Naive thymus-derived CD8-positive, alpha-beta T cell (primary cell): ENCODE measurements at regions of chr11 and their contacts with region 1.

Region 1: DNA sequence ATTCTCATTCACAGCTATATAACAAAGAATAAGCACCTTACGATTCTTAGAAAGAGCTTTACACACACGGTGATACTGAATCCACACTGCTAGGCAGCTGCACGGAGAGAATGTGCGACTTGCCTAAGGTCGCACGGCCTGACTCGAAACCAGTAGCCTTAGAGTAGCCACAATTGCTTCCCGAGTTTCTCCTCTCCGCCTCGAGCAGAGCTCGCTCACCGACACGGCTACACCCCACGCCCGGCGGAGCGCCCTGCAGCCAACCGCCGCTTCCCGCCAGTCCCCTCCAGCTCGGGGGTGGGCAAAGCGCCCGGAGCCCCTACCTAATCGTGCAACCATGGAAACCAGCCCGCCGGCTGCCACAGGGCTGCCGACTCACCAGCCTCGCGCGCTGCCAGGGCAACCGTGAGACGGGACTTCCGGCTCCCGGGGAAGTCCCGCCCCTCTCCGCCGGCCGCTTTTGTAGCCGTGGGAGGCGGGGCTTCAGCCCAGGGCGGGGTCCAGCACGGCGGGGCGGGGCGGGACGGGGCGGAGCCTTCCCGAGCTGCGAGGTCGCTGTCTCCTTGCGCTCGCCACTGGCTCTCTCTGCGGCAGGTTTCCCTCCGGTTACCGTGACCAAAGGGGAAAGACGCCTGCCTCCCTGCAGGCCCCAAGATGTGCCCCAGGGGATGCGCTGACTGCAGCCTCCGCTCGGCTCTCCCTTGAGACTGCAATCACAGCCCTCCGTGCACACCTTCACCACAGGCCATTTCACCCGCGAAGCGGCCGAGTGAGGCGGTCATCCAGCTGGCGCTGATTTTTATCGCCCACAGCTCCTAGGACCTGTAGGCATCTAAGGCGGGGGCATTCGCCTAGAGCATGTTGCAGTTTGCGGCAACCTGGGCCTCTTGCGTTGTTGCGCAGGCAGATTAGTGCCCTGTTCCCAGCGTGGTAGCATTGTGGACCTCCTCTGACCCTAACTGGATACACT is 1.1 kb downstream of the BSCL2 start:
- DNase-seq: peak; percentile 89 to 98 (median 94)
- ATAC-seq: peak; percentile 62
- H3K4me3 Mint-ChIP-seq: peak overlapping the region; percentile 85 to 95 (median 90)
- H3K27ac Mint-ChIP-seq: peak overlapping the region; percentile 88 to 100 (median 96)
- H3K4me1 Mint-ChIP-seq: peaks cover 24 to 56% (median 42%) of the 10 kb centered on the region in 4 donors
- H3K27me3 Mint-ChIP-seq: no peaks in the 10 kb centered on the region

Region 2: GRCh38 chr11:62069986-62070919 is 635.9 kb before region 1 on chr11:
- POLR2A ChIA-PET with region 1: no interaction called
- DNase-seq: no peak
- ATAC-seq: no peak
- H3K4me3 Mint-ChIP-seq: no peak overlapping the region
- H3K27ac Mint-ChIP-seq: no peak overlapping the region
- H3K4me1 Mint-ChIP-seq: no peaks in the 10 kb centered on the region
- H3K27me3 Mint-ChIP-seq: peaks cover 0 to 9% (median 2%) of the 10 kb centered on the region in 5 donors

Region 3: DNA sequence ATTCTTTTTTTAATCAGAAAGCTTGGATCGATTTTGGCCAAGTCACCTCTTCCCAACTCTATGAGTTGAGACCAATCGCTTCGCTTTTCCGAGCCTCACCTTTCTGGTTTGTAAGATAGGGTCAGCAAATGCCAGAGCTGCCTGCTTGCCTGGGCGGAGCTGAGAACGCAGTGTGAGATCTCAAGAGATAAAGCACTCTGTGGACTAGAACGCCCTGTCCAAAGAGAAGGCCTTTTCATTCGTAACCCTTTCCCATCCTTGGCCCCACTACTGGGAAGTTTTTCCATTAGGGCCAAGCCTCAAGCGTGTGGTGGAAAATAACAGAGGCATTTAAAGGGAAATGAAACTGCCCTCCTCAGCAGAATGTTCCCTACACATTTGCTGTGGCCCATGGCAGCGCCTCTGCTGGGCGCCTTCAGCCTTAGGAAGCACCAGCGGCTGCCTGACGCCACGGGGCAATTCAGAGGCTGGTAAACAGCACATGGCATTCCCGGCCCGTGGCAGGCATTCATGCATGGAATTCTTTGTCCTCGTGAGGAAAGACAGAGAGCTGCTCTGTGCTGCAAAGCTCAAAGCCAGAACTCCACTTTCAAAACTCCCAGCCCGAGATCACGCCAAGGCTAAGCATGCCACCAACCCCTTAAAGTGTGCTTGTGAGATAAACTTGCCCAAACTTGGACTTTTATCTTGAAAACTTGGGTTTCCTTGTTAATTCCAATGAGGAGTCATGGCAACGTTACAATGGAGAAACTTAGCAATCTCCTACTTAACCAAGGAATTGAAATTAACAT is 197.7 kb before region 1 on chr11:
- POLR2A ChIA-PET with region 1: no interaction called
- DNase-seq: peak in 1 of 10 donors; percentile 14
- ATAC-seq: no peak
- H3K4me3 Mint-ChIP-seq: no peak overlapping the region
- H3K27ac Mint-ChIP-seq: no peak overlapping the region
- H3K4me1 Mint-ChIP-seq: peaks cover 0 to 13% (median 0%) of the 10 kb centered on the region in 4 donors
- H3K27me3 Mint-ChIP-seq: peaks cover 0 to 18% (median 5%) of the 10 kb centered on the region in 5 donors

Region 4: GRCh38 chr11:62612366-62613290 is 93.5 kb before region 1 on chr11 and contains the starts of genes EML3 and ROM1:
- POLR2A ChIA-PET with region 1: interaction called, 13 read pairs
- DNase-seq: peak; percentile 79 to 94 (median 88)
- ATAC-seq: peak; percentile 74 to 78
- H3K4me3 Mint-ChIP-seq: peak within 1 kb of the TSS; percentile 91 to 98 (median 94)
- H3K27ac Mint-ChIP-seq: peak within 1 kb of the TSS; percentile 96 to 99 (median 98)
- H3K4me1 Mint-ChIP-seq: peaks cover 32 to 59% (median 57%) of the 10 kb centered on the region in 4 donors
- H3K27me3 Mint-ChIP-seq: no peaks in the 10 kb centered on the region
- polyA plus RNA-seq, gene EML3: 14.8 to 23.7 (median 15.7) TPM
- polyA plus RNA-seq, gene ROM1: 0.82 to 1.9 (median 1.8) TPM

Region 5: GRCh38 chr11:62665075-62665598 is 41.0 kb before region 1 on chr11 and contains the starts of genes C11orf98 and CSKMT:
- POLR2A ChIA-PET with region 1: interaction called, 49 read pairs
- DNase-seq: peak; percentile 89 to 98 (median 96)
- ATAC-seq: peak; percentile 89 to 91
- H3K4me3 Mint-ChIP-seq: peak within 1 kb of the TSS; percentile 94 to 98 (median 95)
- H3K27ac Mint-ChIP-seq: peak within 1 kb of the TSS; percentile 86 to 97 (median 96)
- H3K4me1 Mint-ChIP-seq: peaks cover 22 to 49% (median 42%) of the 10 kb centered on the region in 4 donors
- H3K27me3 Mint-ChIP-seq: no peaks in the 10 kb centered on the region
- polyA plus RNA-seq, gene C11orf98: 99.9 to 149 (median 117) TPM
- polyA plus RNA-seq, gene CSKMT: 1.8 to 3.7 (median 3.4) TPM

Region 6: DNA sequence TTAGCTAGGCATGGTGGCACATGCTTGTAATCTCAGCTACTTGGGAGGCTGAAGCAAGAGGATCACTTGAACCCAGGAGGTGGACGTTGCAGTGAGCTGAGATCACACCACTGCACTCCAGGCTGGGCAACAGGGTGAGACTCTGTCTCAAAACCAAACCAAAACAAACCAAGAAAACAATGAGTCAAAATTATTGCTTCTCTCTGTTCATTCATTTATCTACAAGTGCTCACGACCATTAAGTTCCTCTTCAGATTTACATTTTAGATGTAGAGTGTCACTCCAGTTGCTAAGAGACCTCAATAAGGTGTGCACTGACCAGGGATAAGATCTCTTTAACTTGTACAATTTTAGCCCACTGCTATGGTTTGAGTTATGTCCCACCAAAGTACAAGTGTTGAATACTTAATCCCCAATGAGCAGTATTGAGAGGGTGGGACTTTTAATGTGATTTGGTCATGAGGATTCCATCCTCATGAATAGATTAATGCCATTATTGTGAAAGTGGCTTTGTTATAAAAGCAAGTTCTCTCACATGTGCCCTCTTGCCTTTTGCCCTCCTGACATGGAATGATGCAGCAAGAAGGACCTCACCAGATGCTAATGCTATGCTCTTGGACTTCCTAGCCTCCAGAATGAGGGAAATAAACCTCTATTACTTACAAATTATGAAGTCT is 13.3 kb after region 1 on chr11:
- POLR2A ChIA-PET with region 1: interaction called, 263 read pairs
- DNase-seq: no peak
- ATAC-seq: no peak
- H3K4me3 Mint-ChIP-seq: no peak overlapping the region
- H3K27ac Mint-ChIP-seq: peak overlapping the region in 6 of 10 donors; percentile 1 to 84 (median 47)
- H3K4me1 Mint-ChIP-seq: peaks cover 24 to 59% (median 45%) of the 10 kb centered on the region in 4 donors
- H3K27me3 Mint-ChIP-seq: no peaks in the 10 kb centered on the region

Region 7: GRCh38 chr11:62771144-62772021 is 65.2 kb after region 1 on chr11 and contains the start of gene TAF6L:
- POLR2A ChIA-PET with region 1: interaction called, 41 read pairs
- DNase-seq: peak; percentile 78 to 93 (median 83)
- ATAC-seq: peak; percentile 82 to 94
- H3K4me3 Mint-ChIP-seq: peak within 1 kb of the TSS; percentile 84 to 99 (median 96)
- H3K27ac Mint-ChIP-seq: peak within 1 kb of the TSS; percentile 89 to 98 (median 96)
- H3K4me1 Mint-ChIP-seq: peaks cover 15 to 34% (median 32%) of the 10 kb centered on the region in 4 donors
- H3K27me3 Mint-ChIP-seq: no peaks in the 10 kb centered on the region
- polyA plus RNA-seq, gene TAF6L: 8.7 to 10.8 (median 8.9) TPM

Region 8: DNA sequence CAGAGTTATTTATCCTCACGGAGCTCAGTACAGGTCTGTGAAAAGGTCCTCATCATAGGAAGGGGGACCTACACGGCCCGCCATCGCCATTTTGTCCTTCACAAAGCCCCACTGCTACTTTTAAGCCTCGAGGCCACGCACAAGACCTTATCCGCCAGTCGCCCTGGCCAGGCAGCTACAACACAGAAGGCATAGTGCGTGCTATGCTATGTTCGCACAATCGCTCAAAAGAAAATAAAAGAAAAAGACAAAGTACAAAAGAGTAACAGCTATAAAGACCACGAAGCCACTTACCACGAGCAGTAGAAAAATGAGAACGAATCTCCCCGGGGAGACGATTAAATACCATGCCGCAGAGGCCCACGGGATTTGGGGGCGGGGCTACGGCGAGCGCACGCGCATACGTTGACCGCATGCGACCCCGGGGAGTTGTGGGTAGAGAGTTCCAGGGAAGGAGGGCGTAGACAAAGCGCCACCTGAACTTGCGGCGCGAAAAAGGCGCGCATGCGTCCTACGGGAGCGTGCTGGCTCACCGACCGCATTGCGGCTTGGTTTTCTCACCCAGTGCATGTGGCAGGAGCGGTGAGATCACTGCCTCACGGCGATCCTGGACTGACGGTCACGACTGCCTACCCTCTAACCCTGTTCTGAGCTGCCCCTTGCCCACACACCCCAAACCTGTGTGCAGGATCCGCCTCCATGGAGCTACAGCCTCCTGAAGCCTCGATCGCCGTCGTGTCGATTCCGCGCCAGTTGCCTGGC is 149.6 kb after region 1 on chr11:
- POLR2A ChIA-PET with region 1: interaction called, 50 read pairs
- DNase-seq: peak; percentile 94 to 99 (median 98)
- ATAC-seq: peak; percentile 87 to 90
- H3K4me3 Mint-ChIP-seq: peak overlapping the region; percentile 95 to 99 (median 98)
- H3K27ac Mint-ChIP-seq: peak overlapping the region; percentile 88 to 99 (median 98)
- H3K4me1 Mint-ChIP-seq: peaks cover 33 to 54% (median 52%) of the 10 kb centered on the region in 4 donors
- H3K27me3 Mint-ChIP-seq: peaks cover 0 to 4% (median 0%) of the 10 kb centered on the region in 5 donors